Spleen (tissue), 13 donors: ENCODE measurements at regions of chr6 and their contacts with region 1.

Region 1: DNA sequence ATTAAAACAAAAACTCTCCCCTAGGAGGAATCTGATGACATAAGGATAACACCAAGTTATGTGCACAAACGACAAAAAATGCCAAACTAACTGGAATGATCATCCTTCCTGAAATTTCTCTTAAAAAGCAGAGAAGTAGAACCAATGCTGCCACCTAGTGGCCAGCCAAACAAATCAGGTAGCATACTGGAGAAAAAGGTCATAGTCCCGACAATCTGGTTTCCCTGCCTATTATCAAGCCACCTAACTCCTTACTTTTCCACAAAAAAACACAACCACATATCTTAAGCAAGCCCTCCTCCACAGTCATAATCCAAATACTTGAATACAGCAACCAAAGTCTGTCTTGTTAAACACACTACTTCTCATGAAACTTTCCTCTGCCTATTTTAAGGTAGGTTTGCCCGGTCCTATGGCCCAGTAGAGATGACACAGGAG is 5.3 kb downstream of the OARD1 start:
- DNase-seq: no peak
- H3K4me3 ChIP-seq: no peak overlapping the region
- H3K27ac ChIP-seq: no peak overlapping the region
- H3K4me1 ChIP-seq: peaks cover 10 to 29% (median 18%) of the 10 kb centered on the region in 6 donors
- H3K27me3 ChIP-seq: no peaks in the 10 kb centered on the region
- CTCF ChIP-seq: peak; percentile 54 to 86 (median 82)
- POLR2A ChIP-seq: no peak

Region 2: DNA sequence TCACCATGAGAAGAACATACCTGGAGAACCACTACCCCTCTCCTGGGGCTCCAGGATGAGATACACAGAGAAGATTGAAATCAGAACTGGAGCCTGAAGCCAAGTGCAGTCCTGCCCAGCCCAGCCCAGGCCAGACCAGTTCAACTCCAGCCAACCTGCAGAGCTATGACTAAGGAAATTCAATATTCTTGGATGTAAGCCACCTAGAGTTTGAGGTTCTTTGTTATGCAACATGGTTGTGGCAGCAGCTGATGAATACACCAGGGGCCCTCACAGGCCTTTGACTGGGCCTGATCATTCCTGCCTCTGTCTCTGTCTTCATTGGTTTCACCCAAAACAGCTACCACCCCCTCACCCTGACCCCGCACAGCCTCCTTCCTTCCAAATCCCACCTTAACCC is 647.5 kb before region 1 on chr6:
- intact Hi-C with region 1: no loop called
- DNase-seq: no peak
- H3K4me3 ChIP-seq: no peak overlapping the region
- H3K27ac ChIP-seq: no peak overlapping the region
- H3K4me1 ChIP-seq: no peaks in the 10 kb centered on the region
- H3K27me3 ChIP-seq: no peaks in the 10 kb centered on the region
- CTCF ChIP-seq: no peak
- POLR2A ChIP-seq: no peak

Region 3: GRCh38 chr6:41008011-41008410 is 58.9 kb before region 1 on chr6:
- intact Hi-C with region 1: loop called (anchors 5 kb)
- DNase-seq: no peak
- H3K4me3 ChIP-seq: no peak overlapping the region
- H3K27ac ChIP-seq: no peak overlapping the region
- H3K4me1 ChIP-seq: peaks cover 0 to 7% (median 0%) of the 10 kb centered on the region in 6 donors
- H3K27me3 ChIP-seq: peaks cover 0 to 14% (median 0%) of the 10 kb centered on the region in 7 donors
- CTCF ChIP-seq: no peak
- POLR2A ChIP-seq: no peak

Region 4: DNA sequence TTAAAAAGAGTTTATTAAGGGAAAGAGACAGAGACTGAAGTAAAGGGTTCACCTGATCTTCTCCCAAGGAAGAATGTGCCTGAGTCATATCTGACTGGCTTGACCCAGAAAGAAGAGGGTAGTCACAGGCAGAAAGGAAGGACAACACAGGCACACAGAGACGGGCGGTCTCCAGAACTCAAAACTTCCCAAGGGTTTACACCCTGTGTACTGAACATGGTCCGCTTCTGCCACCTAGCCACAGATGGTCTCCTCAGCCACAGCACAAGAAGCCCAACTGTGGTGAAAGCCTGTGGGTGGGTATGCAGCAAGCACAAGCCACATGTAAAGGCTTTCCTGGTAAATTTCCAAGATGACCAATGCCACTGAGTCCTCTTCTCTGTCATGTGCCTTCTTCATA is 45.1 kb before region 1 on chr6:
- intact Hi-C with region 1: no loop called
- DNase-seq: no peak
- H3K4me3 ChIP-seq: no peak overlapping the region
- H3K27ac ChIP-seq: no peak overlapping the region
- H3K4me1 ChIP-seq: no peaks in the 10 kb centered on the region
- H3K27me3 ChIP-seq: no peaks in the 10 kb centered on the region
- CTCF ChIP-seq: no peak
- POLR2A ChIP-seq: no peak

Region 5: DNA sequence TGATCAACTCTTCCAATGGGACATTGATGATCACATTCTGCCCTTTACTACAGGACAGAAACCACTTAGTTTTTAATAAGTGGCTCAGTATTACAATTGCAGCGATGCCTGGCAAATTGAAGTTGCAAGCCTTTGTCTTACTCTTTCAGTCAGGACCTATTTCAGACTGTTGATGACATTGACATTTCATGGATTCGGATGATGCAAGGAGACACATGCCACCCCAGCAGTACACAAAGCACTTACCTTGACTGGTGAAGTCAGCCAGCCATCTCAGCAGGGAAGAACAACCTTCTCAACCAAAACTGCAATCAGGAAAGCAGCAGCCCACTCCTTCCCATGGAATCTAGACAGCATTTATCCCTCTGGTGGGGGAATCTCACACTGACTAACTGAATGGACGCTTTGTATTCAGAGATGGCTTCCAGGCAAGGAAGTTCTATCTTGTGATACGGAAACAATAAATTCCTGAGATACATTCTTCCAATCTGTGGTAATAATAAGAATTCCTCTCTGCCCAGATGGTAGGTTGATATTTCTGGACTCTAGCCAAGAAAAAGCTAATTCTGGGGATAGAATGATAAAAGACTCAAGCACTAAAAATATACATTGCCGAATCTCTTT is 30.7 kb after region 1 on chr6:
- intact Hi-C with region 1: no loop called
- DNase-seq: no peak
- H3K4me3 ChIP-seq: no peak overlapping the region
- H3K27ac ChIP-seq: no peak overlapping the region
- H3K4me1 ChIP-seq: peaks cover 0 to 4% (median 0%) of the 10 kb centered on the region in 6 donors
- H3K27me3 ChIP-seq: no peaks in the 10 kb centered on the region
- CTCF ChIP-seq: no peak
- POLR2A ChIP-seq: no peak